CD4-positive, alpha-beta memory T cell (primary cell): ENCODE measurements at regions of chr5 and their contacts with region 1.

Region 1: DNA sequence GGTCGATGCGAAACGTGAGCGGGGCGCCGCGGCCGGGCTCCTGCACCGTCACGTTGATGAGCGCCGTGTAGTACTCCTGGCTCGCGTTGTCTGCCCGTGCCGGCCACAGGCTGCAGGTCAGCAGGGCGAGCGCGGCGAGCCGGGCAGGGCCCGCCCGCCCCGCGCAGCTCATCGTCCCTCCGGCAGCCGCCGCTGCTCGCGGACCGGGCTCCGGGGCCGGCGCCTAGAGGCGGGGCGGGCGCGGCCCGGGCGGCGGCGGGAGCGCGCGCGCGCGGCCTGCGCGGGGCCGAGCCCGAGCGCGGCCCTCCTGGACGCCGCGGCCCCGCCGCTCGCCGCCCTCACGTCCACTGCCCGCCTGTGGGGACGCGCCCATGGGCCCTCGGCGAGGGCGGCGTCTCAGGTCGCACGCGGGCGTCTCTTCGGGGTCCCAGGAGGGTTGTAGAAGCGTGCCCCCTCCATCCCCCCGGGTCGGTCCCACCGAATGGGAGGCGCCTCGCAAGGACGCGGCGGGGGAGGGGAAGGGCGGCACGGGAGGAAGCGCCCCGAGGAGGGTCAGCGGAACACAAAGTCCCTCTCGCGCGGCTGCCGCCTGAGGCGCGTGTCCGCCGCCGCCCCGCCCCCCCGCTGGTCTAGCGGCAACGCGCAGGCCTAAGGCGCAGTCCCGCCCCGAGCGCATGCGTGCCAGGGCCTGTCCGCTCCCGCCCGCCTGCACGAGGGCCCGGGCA is at the start of gene RNF130:
- DNase-seq: peak; percentile 70 to 84 (median 79)
- H3K4me3 ChIP-seq: peak within 1 kb of the TSS; percentile 37 to 64
- H3K4me3 Mint-ChIP-seq: peak within 1 kb of the TSS; percentile 83 to 93 (median 89)
- H3K27ac ChIP-seq: peak within 1 kb of the TSS; percentile 56
- H3K27ac Mint-ChIP-seq: peak within 1 kb of the TSS; percentile 80 to 94 (median 89)
- H3K4me1 ChIP-seq: peaks cover 22% of the 10 kb centered on the region
- H3K4me1 Mint-ChIP-seq: peaks cover 18 to 35% (median 24%) of the 10 kb centered on the region in 4 donors
- H3K27me3 ChIP-seq: no peaks in the 10 kb centered on the region
- H3K27me3 Mint-ChIP-seq: peaks cover 0 to 3% of the 10 kb centered on the region in 2 donors
- total RNA-seq, gene RNF130: 18.1 to 21.2 TPM

Region 2: DNA sequence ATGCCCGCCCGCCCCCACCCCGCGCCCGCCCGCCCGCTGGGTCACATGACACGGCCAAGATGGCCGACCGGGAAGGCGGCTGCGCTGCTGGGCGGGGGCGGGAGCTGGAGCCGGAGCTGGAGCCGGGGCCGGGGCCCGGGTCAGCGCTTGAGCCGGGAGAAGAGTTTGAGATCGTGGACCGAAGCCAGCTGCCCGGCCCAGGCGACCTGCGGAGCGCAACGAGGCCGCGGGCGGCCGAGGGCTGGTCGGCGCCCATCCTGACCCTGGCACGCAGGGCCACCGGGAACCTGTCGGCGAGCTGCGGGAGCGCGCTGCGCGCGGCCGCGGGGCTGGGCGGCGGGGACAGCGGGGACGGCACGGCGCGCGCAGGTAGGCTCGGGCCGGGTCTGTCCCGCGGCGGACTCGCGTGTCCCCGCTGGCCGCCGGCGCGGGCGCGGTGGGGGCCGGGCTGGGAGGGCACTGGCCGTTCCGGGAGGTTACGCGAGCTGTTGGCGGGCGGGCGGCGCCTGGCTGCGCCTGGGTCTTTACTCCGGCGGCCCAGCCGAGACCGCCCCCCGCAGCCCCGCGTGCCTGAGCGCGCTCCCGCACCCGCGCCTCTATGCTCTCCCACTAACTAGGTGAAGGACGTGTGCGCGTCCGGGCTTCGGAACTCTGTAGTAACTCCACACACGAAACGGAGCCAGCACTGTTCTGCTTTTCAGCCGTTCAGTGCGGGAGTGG is 521.0 kb before region 1 on chr5 and contains the start of gene RUFY1:
- CTCF ChIA-PET with region 1: no interaction called
- POLR2A ChIA-PET with region 1: no interaction called
- intact Hi-C with region 1: loop called (anchors 5 kb)
- DNase-seq: peak; percentile 81 to 92 (median 87)
- H3K4me3 ChIP-seq: peak within 1 kb of the TSS; percentile 78 to 91
- H3K4me3 Mint-ChIP-seq: peak within 1 kb of the TSS; percentile 94 to 99 (median 96)
- H3K27ac ChIP-seq: peak within 1 kb of the TSS; percentile 66
- H3K27ac Mint-ChIP-seq: peak within 1 kb of the TSS; percentile 94 to 99 (median 97)
- H3K4me1 ChIP-seq: peaks cover 30% of the 10 kb centered on the region
- H3K4me1 Mint-ChIP-seq: peaks cover 17 to 45% (median 27%) of the 10 kb centered on the region in 4 donors
- H3K27me3 ChIP-seq: no peaks in the 10 kb centered on the region
- H3K27me3 Mint-ChIP-seq: no peaks in the 10 kb centered on the region
- total RNA-seq, gene RUFY1: 59.1 to 61.5 TPM

Region 3: DNA sequence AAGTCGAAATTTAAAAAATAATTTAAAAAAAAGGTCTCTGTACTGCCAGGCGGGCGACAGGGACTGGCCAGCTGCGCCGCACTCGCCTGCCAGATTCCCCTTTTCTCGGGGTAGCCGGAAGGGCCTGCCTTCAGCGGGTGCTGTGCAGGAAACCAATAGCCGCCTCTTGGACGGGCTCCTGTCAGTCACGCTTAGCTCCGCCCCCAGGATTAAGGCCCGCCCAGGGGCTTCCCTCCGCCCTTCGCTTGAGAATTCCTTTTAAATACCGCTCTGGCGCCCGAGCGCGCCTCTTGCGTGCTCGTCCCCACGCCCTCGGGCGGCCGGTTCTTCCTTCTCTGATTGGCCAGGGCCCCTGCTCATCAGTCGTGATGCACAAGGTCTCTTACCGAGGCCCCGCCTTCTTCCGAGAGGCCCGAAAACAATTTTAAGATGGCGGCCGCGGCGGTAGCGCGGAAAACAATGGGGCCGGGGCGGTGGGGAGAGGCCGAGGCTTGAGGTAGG is 339.2 kb before region 1 on chr5 and contains the start of gene MAML1:
- CTCF ChIA-PET with region 1: no interaction called
- POLR2A ChIA-PET with region 1: no interaction called
- intact Hi-C with region 1: loop called (anchors 1 kb)
- DNase-seq: peak; percentile 99 to 100 (median 99)
- H3K4me3 ChIP-seq: peak within 1 kb of the TSS; percentile 53 to 62
- H3K4me3 Mint-ChIP-seq: peak within 1 kb of the TSS; percentile 92 to 97 (median 95)
- H3K27ac ChIP-seq: peak within 1 kb of the TSS; percentile 96
- H3K27ac Mint-ChIP-seq: peak within 1 kb of the TSS; percentile 92 to 99 (median 96)
- H3K4me1 ChIP-seq: peaks cover 44% of the 10 kb centered on the region
- H3K4me1 Mint-ChIP-seq: peaks cover 25 to 51% (median 37%) of the 10 kb centered on the region in 4 donors
- H3K27me3 ChIP-seq: no peaks in the 10 kb centered on the region
- H3K27me3 Mint-ChIP-seq: no peaks in the 10 kb centered on the region
- total RNA-seq, gene MAML1: 52.4 to 56.5 TPM

Region 4: DNA sequence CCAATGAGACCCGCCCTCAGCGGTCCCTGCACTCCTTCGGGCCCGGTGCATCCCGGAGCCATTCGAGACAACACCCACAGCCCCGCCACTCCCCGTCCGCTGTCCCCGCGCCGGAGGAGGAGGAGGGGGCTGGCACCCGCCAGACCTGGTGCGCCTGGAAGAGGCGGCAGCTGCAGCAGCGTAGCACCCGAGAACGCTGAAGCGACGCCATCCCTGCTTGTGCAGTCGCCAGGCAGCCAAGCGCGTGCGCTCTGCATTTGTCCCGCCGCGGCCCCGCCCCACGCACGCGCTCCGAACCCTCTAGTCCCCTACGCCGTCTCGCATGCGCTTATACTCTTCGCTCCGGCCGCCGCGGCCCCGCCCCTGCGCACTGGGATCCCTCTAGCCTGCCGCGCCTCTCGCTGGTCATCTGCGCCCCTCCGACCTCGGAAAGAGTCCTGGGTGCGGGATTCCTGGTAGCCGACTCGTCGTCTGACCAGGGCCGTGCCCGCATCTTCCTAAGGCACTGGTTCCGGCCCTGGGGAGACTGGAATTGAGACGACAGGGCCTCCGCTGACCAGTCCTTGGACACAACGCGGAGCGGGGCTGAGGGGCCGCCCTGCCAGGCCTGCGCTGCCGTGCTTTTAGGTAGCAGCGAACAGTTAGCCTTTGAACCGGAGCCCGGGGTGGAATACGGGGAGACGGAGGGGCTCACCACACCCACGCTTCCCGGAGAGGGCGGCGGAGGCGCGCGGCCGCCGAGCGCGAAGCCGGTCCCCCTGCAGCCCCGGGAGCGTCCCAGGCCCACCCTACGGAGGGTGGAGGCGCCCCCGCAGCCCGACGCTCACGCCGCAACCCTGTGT is 212.9 kb before region 1 on chr5 and contains the start of gene MRNIP:
- CTCF ChIA-PET with region 1: no interaction called
- POLR2A ChIA-PET with region 1: no interaction called
- intact Hi-C with region 1: loop called (anchors 5 kb)
- DNase-seq: peak; percentile 83 to 90 (median 86)
- H3K4me3 ChIP-seq: peak within 1 kb of the TSS; percentile 95 to 96
- H3K4me3 Mint-ChIP-seq: peak within 1 kb of the TSS; percentile 94 to 98 (median 97)
- H3K27ac ChIP-seq: peak within 1 kb of the TSS; percentile 66
- H3K27ac Mint-ChIP-seq: peak within 1 kb of the TSS; percentile 87 to 94 (median 92)
- H3K4me1 ChIP-seq: peaks cover 12% of the 10 kb centered on the region
- H3K4me1 Mint-ChIP-seq: peaks cover 7 to 30% (median 12%) of the 10 kb centered on the region in 4 donors
- H3K27me3 ChIP-seq: no peaks in the 10 kb centered on the region
- H3K27me3 Mint-ChIP-seq: no peaks in the 10 kb centered on the region
- total RNA-seq, gene MRNIP: 125 to 129 TPM

Region 5: GRCh38 chr5:179907570-179908324 is 163.9 kb before region 1 on chr5 and contains the start of gene TBC1D9B:
- CTCF ChIA-PET with region 1: no interaction called
- POLR2A ChIA-PET with region 1: no interaction called
- intact Hi-C with region 1: loop called (anchors 5 kb)
- DNase-seq: peak; percentile 76 to 82 (median 78)
- H3K4me3 ChIP-seq: peak within 1 kb of the TSS in 1 of 2 donors; percentile 57
- H3K4me3 Mint-ChIP-seq: peak within 1 kb of the TSS; percentile 85 to 92 (median 88)
- H3K27ac ChIP-seq: peak within 1 kb of the TSS; percentile 54
- H3K27ac Mint-ChIP-seq: peak within 1 kb of the TSS; percentile 78 to 94 (median 84)
- H3K4me1 ChIP-seq: peaks cover 23% of the 10 kb centered on the region
- H3K4me1 Mint-ChIP-seq: peaks cover 7 to 38% (median 15%) of the 10 kb centered on the region in 4 donors
- H3K27me3 ChIP-seq: no peaks in the 10 kb centered on the region
- H3K27me3 Mint-ChIP-seq: no peaks in the 10 kb centered on the region
- total RNA-seq, gene TBC1D9B: 84.3 to 85.0 TPM

Region 6: DNA sequence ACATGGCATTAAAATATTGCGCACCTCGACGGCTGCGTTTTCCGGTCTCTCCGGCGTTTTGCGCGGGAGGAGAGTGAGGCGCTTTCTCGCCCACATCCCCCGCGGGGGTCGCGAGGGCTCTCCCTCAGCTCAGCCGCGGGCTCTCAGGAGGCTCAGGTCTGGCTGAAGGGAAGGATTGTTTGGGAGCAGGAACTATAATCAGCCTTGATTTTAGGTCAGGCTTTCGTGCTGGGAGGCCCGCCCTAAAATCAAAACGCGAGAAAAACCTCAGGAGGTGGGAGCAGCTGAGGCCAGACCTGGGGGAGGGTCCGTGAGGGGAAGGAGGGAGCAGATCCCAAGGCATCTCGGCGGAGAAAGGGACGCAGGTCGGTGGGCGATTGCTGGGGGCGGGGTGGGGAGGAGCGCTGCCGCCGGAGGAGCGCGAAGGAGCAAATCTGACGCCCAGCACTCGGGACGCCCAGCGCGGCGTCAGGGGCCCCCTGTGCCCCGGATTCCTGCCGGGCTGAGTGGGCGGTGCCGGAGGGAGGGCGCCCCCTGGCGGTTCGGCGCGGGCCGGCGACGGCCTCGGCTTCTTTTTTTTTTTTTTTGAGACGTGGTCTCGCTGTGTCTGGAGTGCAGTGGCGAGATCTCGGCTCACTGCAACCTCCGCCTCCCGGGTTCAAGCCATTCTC is 18.5 kb after region 1 on chr5:
- CTCF ChIA-PET with region 1: interaction called, 9 read pairs
- POLR2A ChIA-PET with region 1: interaction called, 7 read pairs
- intact Hi-C with region 1: loop called (anchors 1 kb)
- DNase-seq: peak; percentile 69 to 85 (median 81)
- H3K4me3 ChIP-seq: peak overlapping the region; percentile 48 to 52
- H3K4me3 Mint-ChIP-seq: peak overlapping the region; percentile 74 to 90 (median 87)
- H3K27ac ChIP-seq: peak overlapping the region; percentile 49
- H3K27ac Mint-ChIP-seq: peak overlapping the region; percentile 69 to 91 (median 80)
- H3K4me1 ChIP-seq: peaks cover 13% of the 10 kb centered on the region
- H3K4me1 Mint-ChIP-seq: peaks cover 11 to 29% (median 16%) of the 10 kb centered on the region in 4 donors
- H3K27me3 ChIP-seq: no peaks in the 10 kb centered on the region
- H3K27me3 Mint-ChIP-seq: peaks cover 1 to 5% of the 10 kb centered on the region in 2 donors

Region 7: GRCh38 chr5:180101451-180102105 is 29.9 kb after region 1 on chr5:
- CTCF ChIA-PET with region 1: no interaction called
- POLR2A ChIA-PET with region 1: no interaction called
- intact Hi-C with region 1: no loop called
- DNase-seq: no peak
- H3K4me3 ChIP-seq: no peak overlapping the region
- H3K4me3 Mint-ChIP-seq: no peak overlapping the region
- H3K27ac ChIP-seq: no peak overlapping the region
- H3K27ac Mint-ChIP-seq: no peak overlapping the region
- H3K4me1 ChIP-seq: no peaks in the 10 kb centered on the region
- H3K4me1 Mint-ChIP-seq: no peaks in the 10 kb centered on the region
- H3K27me3 ChIP-seq: no peaks in the 10 kb centered on the region
- H3K27me3 Mint-ChIP-seq: peaks cover 4 to 8% of the 10 kb centered on the region in 2 donors